PC-3 (cell line): ENCODE measurements at regions of chr13 and their contacts with region 1.

Region 1: DNA sequence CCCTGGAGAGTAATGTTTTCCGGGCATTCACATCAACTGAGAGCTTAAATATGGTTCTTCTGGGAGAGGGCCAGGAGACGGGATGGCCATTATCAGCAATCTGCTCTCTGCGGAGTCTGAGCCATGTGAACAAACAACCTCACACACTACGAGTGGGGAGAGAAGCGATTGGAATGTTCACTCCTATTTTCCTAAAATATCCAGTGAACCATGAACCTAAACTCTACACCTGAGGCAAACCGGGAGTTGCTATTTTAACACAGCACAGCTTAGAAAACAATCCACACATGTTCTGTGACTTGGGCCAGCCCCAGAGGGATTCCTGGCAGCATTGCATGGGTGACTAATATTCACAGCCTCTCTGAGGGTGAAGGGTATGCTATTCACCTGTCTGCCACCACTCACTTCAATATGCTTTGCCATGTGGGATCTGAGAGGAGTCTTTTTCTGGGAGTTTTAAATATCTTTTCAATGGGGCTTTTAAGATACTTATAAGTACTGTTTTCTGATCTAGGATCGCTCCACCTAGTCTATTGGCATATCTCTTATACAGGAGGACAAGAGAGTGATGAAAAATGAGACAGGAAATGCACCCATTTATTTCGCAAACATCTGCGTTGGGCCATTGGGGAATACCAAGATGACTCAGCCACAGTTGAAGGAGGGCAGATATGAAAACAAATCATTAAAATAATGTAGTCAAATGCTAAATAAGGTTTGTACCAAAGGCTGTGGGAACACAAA is 72.6 kb upstream of the SERP2 start:
- DNase-seq: peak; percentile 89
- ATAC-seq: peak; percentile 76
- H3K4me3 ChIP-seq: 0 out of 2 replicates have a peak overlapping the region, but pooled peaks have one; percentile 9
- H3K27ac ChIP-seq: peak overlapping the region; percentile 100
- H3K4me1 ChIP-seq: peaks cover 66% of the 10 kb centered on the region
- H3K27me3 ChIP-seq: no peaks in the 10 kb centered on the region
- CTCF ChIP-seq: no peak

Region 2: DNA sequence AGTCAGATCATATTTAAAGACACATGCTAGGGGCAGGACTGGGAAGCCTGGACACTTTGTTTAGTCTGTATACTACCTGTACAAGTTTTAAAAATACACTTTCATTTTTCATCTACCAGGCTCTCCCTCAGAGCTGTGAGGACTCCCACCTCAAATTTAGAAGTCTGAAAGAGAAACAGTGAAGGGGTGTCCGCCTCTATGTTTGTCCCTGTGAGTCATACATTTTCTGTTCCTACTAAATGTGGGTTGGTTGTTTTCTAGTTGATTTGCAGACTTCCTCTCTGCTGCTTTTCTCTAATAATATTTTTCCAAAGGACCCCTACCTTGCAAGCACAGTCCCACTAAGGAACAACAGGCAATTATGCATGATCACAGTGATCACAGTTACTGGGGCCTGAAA is 624.7 kb before region 1 on chr13:
- CTCF ChIA-PET with region 1: no interaction called
- POLR2A ChIA-PET with region 1: no interaction called
- intact Hi-C with region 1: no loop called
- DNase-seq: no peak
- ATAC-seq: no peak
- H3K4me3 ChIP-seq: no peak overlapping the region
- H3K27ac ChIP-seq: no peak overlapping the region
- H3K4me1 ChIP-seq: no peaks in the 10 kb centered on the region
- H3K27me3 ChIP-seq: no peaks in the 10 kb centered on the region
- CTCF ChIP-seq: no peak

Region 3: GRCh38 chr13:43905435-43906031 is 395.5 kb before region 1 on chr13:
- CTCF ChIA-PET with region 1: no interaction called
- POLR2A ChIA-PET with region 1: no interaction called
- intact Hi-C with region 1: loop called (anchors 10 kb)
- DNase-seq: peak; percentile 80
- ATAC-seq: peak; percentile 59
- H3K4me3 ChIP-seq: no peak overlapping the region
- H3K27ac ChIP-seq: no peak overlapping the region
- H3K4me1 ChIP-seq: peaks cover 20% of the 10 kb centered on the region
- H3K27me3 ChIP-seq: no peaks in the 10 kb centered on the region
- CTCF ChIP-seq: peak; percentile 76

Region 4: DNA sequence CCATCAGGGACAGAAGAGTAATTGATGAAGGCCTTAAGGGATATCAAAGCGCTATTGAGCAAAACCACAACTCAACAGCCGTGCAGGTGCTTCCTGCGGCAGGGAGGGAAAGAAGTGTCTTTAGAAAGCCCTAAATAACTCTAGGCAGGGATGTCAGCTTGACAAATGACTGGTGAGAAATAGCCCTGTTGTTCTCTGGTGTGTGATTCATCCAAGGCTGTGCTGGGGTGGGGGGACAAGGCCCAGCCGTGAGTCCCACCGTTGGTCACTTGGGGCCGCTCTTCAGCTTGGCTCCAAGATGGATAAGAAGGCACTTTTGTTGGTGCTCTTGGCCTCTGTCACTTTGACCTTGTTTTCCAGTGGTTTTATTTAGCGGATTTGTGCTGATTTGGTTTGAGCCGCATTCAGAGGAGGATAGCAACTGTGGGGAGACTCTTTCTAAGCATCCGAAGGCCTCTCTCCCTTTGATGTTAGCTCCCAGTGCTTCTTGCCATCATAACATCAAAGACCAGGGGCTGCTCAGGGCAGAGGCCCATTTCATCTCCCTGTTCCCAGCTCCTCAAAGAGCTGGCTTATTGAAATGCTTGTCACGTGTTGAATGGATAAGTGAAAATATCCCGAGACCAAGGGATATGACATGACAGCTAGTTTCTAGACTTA is 57.7 kb before region 1 on chr13:
- CTCF ChIA-PET with region 1: no interaction called
- POLR2A ChIA-PET with region 1: no interaction called
- intact Hi-C with region 1: loop called (anchors 1 kb)
- DNase-seq: peak; percentile 59
- ATAC-seq: peak; percentile 81
- H3K4me3 ChIP-seq: no peak overlapping the region
- H3K27ac ChIP-seq: peak overlapping the region; percentile 92
- H3K4me1 ChIP-seq: peaks cover 20% of the 10 kb centered on the region
- H3K27me3 ChIP-seq: no peaks in the 10 kb centered on the region
- CTCF ChIP-seq: peak; percentile 64

Region 5: GRCh38 chr13:44312898-44313551 is 12.0 kb after region 1 on chr13:
- CTCF ChIA-PET with region 1: no interaction called
- POLR2A ChIA-PET with region 1: no interaction called
- intact Hi-C with region 1: loop called (anchors 1 kb)
- DNase-seq: peak; percentile 91
- ATAC-seq: peak; percentile 60
- H3K4me3 ChIP-seq: peak overlapping the region; percentile 43; the same call in 1 of the 2 replicates
- H3K27ac ChIP-seq: peak overlapping the region; percentile 100
- H3K4me1 ChIP-seq: peaks cover 72% of the 10 kb centered on the region
- H3K27me3 ChIP-seq: no peaks in the 10 kb centered on the region
- CTCF ChIP-seq: no peak